GM12878 (cell line): ENCODE measurements at regions of chr15 and their contacts with region 1.

Region 1: GRCh38 chr15:45166834-45167630 is 20.7 kb downstream of the SHF start:
- DNase-seq: peak; percentile 51
- ATAC-seq: peak; percentile 95
- H3K4me3 ChIP-seq: peak overlapping the region; percentile 79
- H3K27ac ChIP-seq: peak overlapping the region; percentile 40
- H3K4me1 ChIP-seq: peaks cover 12% of the 10 kb centered on the region
- H3K27me3 ChIP-seq: no peaks in the 10 kb centered on the region
- CTCF ChIP-seq: peak; percentile 79 to 87 (median 83); a peak in 5 of 6 replicates
- EP300 ChIP-seq: no peak
- POLR2A ChIP-seq: peak; percentile 75
- RAD21 ChIP-seq: peak; percentile 41

Region 2: DNA sequence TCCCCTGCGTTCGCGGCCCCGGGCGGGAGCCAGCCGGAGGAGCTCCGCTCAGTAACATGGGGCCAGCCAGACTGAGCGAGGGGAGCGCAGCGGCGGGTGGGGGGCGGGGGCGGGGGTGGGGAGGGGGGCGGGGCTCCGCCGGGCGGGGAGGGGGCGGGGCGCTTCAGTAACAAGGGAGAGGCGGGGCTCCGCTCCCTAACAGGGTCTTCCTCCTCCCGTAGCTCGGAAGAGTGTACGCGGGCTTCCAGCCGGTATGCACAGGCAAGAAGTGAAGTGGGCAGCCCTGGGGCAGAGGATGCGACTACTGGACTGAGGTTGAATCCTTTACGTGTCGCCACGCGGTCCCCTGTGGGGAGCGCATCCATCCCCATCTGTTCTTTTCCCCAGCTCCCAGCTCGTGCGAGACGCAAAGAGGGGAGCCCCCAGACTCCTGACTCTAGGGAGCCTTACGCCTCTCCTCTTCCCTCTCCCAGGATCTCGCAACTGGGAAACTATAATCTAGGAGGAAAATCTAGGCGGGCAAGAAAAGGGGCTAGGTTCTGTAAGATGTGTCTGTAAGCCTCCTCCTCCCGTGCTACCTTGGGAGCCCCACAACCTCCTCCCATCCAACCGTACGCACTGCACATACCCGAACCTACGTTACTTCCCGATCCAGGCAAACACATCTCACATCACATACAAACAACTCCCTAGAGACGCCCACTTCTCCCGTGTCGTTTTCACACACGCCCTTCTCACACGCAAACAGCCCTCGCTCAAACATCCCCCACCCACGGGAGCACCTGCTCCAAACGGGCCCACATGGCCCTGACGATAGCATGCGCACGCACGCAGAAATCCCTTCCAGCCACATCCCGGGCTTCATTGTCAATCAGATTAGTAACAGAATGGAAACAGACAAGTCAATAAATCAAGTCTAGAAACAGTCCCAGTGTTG is 21.1 kb after region 1 on chr15 and contains the start of gene SHF:
- CTCF ChIA-PET with region 1: interaction called, 200 read pairs
- POLR2A ChIA-PET with region 1: interaction called, 7 read pairs
- RAD21 ChIA-PET with region 1: interaction called, 3 read pairs
- SMC1A ChIA-PET with region 1: interaction called, 5 read pairs
- in situ Hi-C with region 1: no loop called
- intact Hi-C with region 1: no loop called
- DNase-seq: no peak
- ATAC-seq: peak; percentile 75
- H3K4me3 ChIP-seq: peak within 1 kb of the TSS; percentile 80
- H3K27ac ChIP-seq: no peak within 1 kb of the TSS
- H3K4me1 ChIP-seq: peaks cover 4% of the 10 kb centered on the region
- H3K27me3 ChIP-seq: peaks cover 0 to 2% of the 10 kb centered on the region in 2 experiments; a peak in 2 of 4 replicates
- CTCF ChIP-seq: no peak
- EP300 ChIP-seq: peak; percentile 94 to 95; a peak in 3 of 4 replicates
- POLR2A ChIP-seq: peak; percentile 82
- RAD21 ChIP-seq: no peak
- polyA plus RNA-seq, gene SHF: 0.04 TPM in 1 of 2 experiments, not detected in the other

Region 3: GRCh38 chr15:45212493-45212892 is 45.5 kb after region 1 on chr15:
- CTCF ChIA-PET with region 1: interaction called, 27 read pairs
- POLR2A ChIA-PET with region 1: no interaction called
- RAD21 ChIA-PET with region 1: interaction called, 4 read pairs
- SMC1A ChIA-PET with region 1: interaction called, 159 read pairs
- in situ Hi-C with region 1: no loop called
- intact Hi-C with region 1: no loop called
- DNase-seq: no peak
- ATAC-seq: no peak
- H3K4me3 ChIP-seq: no peak overlapping the region
- H3K27ac ChIP-seq: no peak overlapping the region
- H3K4me1 ChIP-seq: no peaks in the 10 kb centered on the region
- H3K27me3 ChIP-seq: no peaks in the 10 kb centered on the region
- CTCF ChIP-seq: no peak
- EP300 ChIP-seq: no peak
- POLR2A ChIP-seq: no peak
- RAD21 ChIP-seq: no peak

Region 4: GRCh38 chr15:45307230-45307924 is 140.3 kb after region 1 on chr15:
- CTCF ChIA-PET with region 1: interaction called, 10 read pairs
- POLR2A ChIA-PET with region 1: no interaction called
- RAD21 ChIA-PET with region 1: interaction called, 7 read pairs
- SMC1A ChIA-PET with region 1: interaction called, 4 read pairs
- in situ Hi-C with region 1: no loop called
- intact Hi-C with region 1: no loop called
- DNase-seq: peak; percentile 31
- ATAC-seq: peak; percentile 71
- H3K4me3 ChIP-seq: peak overlapping the region; percentile 60; the same call in 1 of the 2 replicates
- H3K27ac ChIP-seq: no peak overlapping the region
- H3K4me1 ChIP-seq: no peaks in the 10 kb centered on the region
- H3K27me3 ChIP-seq: no peaks in the 10 kb centered on the region
- CTCF ChIP-seq: peak; percentile 39 to 65 (median 58); a peak in 5 of 6 replicates
- EP300 ChIP-seq: no peak
- POLR2A ChIP-seq: no peak
- RAD21 ChIP-seq: peak; percentile 58

Region 5: DNA sequence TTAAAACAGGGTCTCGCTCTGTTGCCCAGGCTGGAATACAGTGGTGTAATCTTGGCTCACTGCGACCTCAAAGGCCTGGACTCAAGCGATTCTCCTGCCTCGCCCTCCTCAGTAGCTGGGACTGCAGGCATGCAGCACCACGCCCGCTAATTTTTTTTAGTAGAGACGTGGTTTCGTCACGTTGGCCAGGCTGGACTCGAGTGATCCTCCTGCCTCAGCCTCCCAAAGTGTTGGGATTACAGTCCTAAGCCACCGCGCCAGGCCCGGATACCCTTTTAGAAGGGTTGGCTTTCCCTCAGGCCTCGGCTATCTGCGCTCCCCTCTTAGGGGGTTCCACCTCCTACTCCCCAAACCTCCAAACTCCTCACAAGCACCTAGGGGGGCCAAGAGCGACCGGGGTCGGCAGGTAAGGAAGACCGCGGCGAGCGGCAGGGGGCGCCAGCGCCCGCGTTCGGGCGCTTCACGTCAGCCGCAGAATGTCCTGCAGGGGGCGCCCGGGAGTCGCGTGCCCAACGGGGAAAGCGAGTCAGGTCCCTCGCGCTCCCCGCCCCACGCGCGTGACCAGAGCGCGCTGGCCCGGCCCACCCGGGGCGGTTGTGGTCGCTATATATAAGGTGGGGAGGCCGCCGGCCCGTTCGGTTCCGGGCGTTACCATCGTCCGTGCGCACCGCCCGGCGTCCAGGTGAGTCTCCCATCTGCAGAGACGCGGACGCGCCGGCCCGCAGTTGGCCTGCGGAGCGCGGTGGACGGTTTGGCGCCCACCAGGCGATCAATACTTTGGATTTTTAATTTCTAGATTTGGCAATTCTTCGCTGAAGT is 263.2 kb after region 1 on chr15:
- CTCF ChIA-PET with region 1: interaction called, 22 read pairs
- POLR2A ChIA-PET with region 1: no interaction called
- RAD21 ChIA-PET with region 1: interaction called, 4 read pairs
- SMC1A ChIA-PET with region 1: interaction called, 7 read pairs
- in situ Hi-C with region 1: no loop called
- intact Hi-C with region 1: no loop called
- DNase-seq: no peak
- ATAC-seq: peak; percentile 98
- H3K4me3 ChIP-seq: peak overlapping the region; percentile 61; the same call in 1 of the 2 replicates
- H3K27ac ChIP-seq: no peak overlapping the region
- H3K4me1 ChIP-seq: 0 out of 2 replicates have a peak, but pooled peaks cover 3% of the 10 kb centered on the region
- H3K27me3 ChIP-seq: no peaks in the 10 kb centered on the region
- CTCF ChIP-seq: peak; percentile 99 to 100 (median 99)
- EP300 ChIP-seq: no peak
- POLR2A ChIP-seq: no peak
- RAD21 ChIP-seq: peak; percentile 79